T-cell (primary cell): ENCODE measurements at regions of chr10 and their contacts with region 1.

Region 1: DNA sequence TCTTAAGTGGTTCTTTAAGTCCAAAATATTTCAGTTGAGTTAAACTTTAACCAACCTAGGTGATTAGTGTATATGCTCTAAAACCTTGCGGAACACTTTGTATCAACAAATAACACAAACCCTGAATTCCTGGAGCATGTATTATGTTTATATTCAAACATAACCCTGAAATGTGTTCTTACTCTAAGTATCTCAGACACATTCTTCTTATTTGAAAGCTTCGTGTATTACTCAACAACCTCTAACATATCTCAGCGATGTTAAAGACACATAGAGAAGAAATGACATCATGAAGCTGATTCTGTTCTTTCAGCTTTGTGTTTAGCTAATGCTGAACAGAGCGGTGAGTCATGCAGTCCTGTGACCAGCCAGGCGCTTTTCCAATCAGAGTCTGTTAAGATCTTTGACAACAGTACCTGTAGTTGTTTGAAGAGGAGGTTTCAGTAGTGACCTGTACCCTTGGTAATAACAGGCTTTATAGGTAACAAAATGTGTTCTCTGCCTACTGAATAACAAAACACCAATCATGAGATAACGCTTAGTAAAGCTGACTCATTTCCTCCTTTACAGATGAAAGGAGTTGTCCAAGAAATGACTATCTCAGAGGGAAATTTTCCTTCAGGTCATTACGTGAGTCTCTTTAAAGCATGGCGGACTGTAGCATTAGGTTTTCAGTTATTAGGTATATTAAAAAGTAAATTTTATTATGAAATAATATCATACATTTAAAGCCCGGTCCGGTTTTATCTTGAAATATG is 67.3 kb upstream of the KLF6 start:
- DNase-seq: peak in 31 of 35 experiments; percentile 20 to 79 (median 45)
- ATAC-seq: peak; percentile 81 to 95 (median 88)
- H3K4me3 ChIP-seq: no peak overlapping the region
- H3K4me3 Mint-ChIP-seq: peak overlapping the region in 1 of 3 donors; percentile 42
- H3K27ac ChIP-seq: peak overlapping the region; percentile 85
- H3K27ac Mint-ChIP-seq: peak overlapping the region; percentile 87 to 90
- H3K4me1 ChIP-seq: peaks cover 0 to 20% of the 10 kb centered on the region in 2 experiments
- H3K4me1 Mint-ChIP-seq: peaks cover 19 to 36% (median 28%) of the 10 kb centered on the region in 3 donors
- H3K27me3 ChIP-seq: no peaks in the 10 kb centered on the region
- H3K27me3 Mint-ChIP-seq: no peaks in the 10 kb centered on the region

Region 2: GRCh38 chr10:3873728-3874461 is 21.6 kb after region 1 on chr10:
- CTCF ChIA-PET with region 1: interaction called in 1 of 2 experiments, 4 read pairs
- POLR2A ChIA-PET with region 1: interaction called in 1 of 2 experiments, 15 read pairs
- DNase-seq: peak in 9 of 35 experiments; percentile 13 to 87 (median 25)
- ATAC-seq: peak in 3 of 4 experiments; percentile 24 to 70 (median 55)
- H3K4me3 ChIP-seq: no peak overlapping the region
- H3K4me3 Mint-ChIP-seq: peak overlapping the region in 2 of 3 donors; percentile 9 to 25
- H3K27ac ChIP-seq: peak overlapping the region; percentile 98
- H3K27ac Mint-ChIP-seq: peak overlapping the region; percentile 81 to 99
- H3K4me1 ChIP-seq: peaks cover 36 to 42% of the 10 kb centered on the region in 2 experiments
- H3K4me1 Mint-ChIP-seq: peaks cover 57 to 70% (median 62%) of the 10 kb centered on the region in 3 donors
- H3K27me3 ChIP-seq: no peaks in the 10 kb centered on the region
- H3K27me3 Mint-ChIP-seq: no peaks in the 10 kb centered on the region